Transverse colon (tissue), 4 donors: ENCODE measurements at regions of chr17 and their contacts with region 1.

Region 1: GRCh38 chr17:58317421-58318064 is 11.1 kb downstream of the TSPOAP1 start:
- DNase-seq: peak; percentile 69
- H3K4me3 ChIP-seq: no peak overlapping the region
- H3K27ac ChIP-seq: peak overlapping the region in 1 of 4 donors; percentile 26
- H3K4me1 ChIP-seq: peaks cover 0 to 7% (median 4%) of the 10 kb centered on the region in 4 donors
- H3K27me3 ChIP-seq: no peaks in the 10 kb centered on the region
- CTCF ChIP-seq: peak; percentile 58 to 85 (median 73)
- EP300 ChIP-seq: no peak
- POLR2A ChIP-seq: no peak

Region 2: DNA sequence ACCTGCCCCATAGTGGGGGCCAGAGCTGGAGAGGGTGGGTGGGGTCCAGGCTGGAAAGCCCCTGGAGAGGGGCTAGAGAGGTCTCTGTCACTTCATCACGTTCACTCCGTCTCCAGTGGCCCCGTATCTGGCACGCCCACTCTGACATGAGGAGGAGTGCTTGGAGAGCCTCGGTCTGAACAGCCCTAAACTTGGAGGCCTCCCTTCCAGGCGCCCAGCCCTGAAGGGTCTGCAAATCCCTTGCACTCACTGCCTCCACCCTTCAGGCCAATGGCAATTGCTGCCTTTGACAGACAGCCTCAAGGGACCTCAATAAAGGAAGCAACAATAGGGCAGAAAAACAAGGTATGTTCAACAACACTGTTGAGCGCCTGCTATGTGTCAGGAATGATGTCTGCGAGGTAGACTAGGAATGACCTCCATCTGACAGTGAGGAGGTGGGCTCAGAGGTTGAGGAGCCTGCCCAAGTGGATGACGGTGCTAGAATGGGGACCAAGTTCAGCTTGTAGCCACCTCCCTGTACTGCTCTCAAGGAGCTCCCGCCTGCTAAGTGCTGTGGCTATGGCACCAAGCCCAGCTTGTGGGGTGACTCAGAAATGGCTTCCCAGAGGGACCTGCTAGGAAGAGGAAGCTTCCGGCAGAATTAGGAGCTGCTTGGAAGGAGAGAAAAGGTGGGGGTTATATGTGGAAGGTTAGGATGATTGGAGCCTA is 128.0 kb before region 1 on chr17:
- in situ Hi-C with region 1: no loop called
- intact Hi-C with region 1: no loop called
- DNase-seq: no peak
- H3K4me3 ChIP-seq: no peak overlapping the region
- H3K27ac ChIP-seq: no peak overlapping the region
- H3K4me1 ChIP-seq: no peaks in the 10 kb centered on the region
- H3K27me3 ChIP-seq: peaks cover 11% of the 10 kb centered on the region
- CTCF ChIP-seq: no peak
- EP300 ChIP-seq: no peak
- POLR2A ChIP-seq: no peak

Region 3: DNA sequence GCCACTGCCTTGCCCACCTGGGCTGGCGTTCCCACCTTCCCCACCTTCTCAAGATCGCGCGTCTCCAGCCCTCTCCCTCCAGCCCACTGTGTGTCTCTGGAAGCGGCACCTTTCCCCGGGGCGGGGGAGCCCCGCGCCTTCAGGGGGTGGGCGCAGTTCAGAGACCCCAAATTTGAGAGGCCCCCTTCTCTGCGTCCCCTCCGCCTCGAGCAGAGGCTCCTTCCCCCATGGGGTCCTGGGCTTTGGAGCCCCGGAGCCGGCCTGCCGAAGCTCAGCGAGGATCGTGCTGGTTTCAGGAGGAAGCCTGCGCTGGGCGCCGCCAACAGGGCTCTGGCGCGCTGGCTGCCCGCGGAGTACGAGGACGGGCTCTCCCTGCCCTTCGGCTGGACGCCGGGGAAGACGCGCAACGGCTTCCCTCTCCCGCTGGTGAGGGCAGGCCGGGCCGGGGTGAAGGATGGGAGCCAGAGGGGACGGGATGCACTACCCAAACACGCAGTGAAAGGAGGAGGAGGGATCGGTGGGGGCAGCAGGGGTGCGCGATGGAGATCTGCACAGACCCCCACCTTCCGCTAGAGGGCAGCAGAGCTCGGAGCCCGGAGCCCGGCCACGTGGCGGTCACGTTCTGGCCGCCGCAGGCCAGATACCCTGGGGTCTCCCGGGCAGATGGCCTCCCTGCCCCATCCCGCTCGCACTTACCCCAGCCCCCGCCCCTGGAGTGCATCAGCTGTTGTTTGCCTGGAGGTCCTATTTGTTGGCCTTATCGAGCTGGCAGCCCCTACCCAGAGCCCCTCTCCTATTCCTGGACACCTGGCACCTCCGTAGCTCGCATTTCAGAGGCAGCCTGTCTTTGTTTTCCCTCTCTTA is 68.0 kb before region 1 on chr17:
- in situ Hi-C with region 1: no loop called
- intact Hi-C with region 1: no loop called
- DNase-seq: peak; percentile 65
- H3K4me3 ChIP-seq: peak overlapping the region; percentile 22 to 47 (median 34)
- H3K27ac ChIP-seq: no peak overlapping the region
- H3K4me1 ChIP-seq: peaks cover 9 to 11% (median 10%) of the 10 kb centered on the region in 4 donors
- H3K27me3 ChIP-seq: peaks cover 32% of the 10 kb centered on the region
- CTCF ChIP-seq: peak; percentile 75 to 96 (median 94)
- EP300 ChIP-seq: no peak
- POLR2A ChIP-seq: no peak

Region 4: DNA sequence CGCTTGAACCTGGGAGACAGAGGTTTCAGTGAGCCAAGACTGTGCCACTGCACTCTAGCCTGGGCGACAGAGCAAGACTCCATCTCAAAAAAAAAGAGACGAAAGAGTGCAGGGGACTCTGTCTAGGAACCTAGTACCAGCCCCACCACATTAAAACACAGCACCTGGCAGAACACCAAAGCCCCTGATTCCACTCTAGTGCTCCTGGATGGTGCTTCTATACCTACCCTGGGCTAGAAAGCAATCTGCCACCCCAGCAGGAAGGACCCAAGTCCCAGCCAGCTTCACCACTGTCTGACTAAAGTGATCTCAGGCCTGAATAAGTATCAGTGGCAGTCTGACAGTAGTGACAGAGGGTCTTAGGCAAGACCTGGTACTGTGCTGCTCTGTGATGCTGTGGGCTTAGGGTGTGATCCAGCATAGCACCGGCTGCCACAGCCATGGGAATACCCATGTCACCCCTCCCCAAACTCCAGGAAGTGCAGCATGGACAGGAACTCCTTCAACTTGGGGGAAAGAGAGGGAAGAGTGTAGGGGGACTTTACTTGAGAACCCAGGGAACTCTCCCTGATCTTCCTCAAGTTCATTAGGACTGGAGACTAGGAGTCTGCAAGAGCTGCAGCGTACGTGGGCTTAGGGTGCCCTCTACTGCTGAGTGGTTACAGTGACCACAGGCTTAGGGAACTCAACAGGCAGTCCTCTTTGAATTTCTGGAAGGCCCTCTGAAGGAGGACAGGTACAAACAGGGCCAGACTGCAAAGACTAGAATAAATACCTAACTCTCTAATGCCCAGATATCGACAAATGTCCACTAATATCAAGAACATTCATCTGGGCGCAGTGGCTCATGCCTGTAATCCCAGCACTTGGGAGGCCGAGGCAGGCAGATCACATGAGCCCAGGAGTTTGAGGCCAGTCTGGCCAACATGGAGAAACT is 129.8 kb after region 1 on chr17:
- in situ Hi-C with region 1: loop called in 3 of 4 experiments (anchors 5 to 10 kb)
- intact Hi-C with region 1: no loop called
- DNase-seq: peak; percentile 81
- H3K4me3 ChIP-seq: no peak overlapping the region
- H3K27ac ChIP-seq: no peak overlapping the region
- H3K4me1 ChIP-seq: no peaks in the 10 kb centered on the region
- H3K27me3 ChIP-seq: no peaks in the 10 kb centered on the region
- CTCF ChIP-seq: peak; percentile 50 to 79 (median 65)
- EP300 ChIP-seq: no peak
- POLR2A ChIP-seq: no peak